A673 (cell line): ENCODE measurements at regions of chr5 and their contacts with region 1.

Region 1: DNA sequence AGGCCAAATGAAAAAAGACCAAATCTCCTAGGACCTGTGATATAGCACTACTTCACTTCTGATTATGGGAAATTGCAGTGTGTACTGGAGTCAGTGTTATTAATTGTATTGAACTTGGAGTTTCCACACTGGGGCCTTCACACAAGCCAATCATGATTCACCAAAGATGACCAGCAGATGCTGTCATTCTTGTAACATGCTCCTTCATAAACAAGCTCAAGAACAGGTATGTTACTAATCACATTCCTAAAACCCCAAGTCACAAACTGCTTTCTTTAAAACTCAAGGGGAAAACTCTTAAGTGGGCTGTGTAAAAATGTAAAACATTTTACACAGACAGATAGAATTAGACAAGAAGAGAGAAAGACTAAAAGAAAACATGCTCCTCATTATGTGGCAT is 5.6 kb downstream of the KLHL3 start:
- DNase-seq: no peak
- H3K4me3 ChIP-seq: no peak overlapping the region
- H3K27ac ChIP-seq: no peak overlapping the region
- H3K4me1 ChIP-seq: no peaks in the 10 kb centered on the region
- H3K27me3 ChIP-seq: peaks cover 3% of the 10 kb centered on the region
- CTCF ChIP-seq: no peak

Region 2: DNA sequence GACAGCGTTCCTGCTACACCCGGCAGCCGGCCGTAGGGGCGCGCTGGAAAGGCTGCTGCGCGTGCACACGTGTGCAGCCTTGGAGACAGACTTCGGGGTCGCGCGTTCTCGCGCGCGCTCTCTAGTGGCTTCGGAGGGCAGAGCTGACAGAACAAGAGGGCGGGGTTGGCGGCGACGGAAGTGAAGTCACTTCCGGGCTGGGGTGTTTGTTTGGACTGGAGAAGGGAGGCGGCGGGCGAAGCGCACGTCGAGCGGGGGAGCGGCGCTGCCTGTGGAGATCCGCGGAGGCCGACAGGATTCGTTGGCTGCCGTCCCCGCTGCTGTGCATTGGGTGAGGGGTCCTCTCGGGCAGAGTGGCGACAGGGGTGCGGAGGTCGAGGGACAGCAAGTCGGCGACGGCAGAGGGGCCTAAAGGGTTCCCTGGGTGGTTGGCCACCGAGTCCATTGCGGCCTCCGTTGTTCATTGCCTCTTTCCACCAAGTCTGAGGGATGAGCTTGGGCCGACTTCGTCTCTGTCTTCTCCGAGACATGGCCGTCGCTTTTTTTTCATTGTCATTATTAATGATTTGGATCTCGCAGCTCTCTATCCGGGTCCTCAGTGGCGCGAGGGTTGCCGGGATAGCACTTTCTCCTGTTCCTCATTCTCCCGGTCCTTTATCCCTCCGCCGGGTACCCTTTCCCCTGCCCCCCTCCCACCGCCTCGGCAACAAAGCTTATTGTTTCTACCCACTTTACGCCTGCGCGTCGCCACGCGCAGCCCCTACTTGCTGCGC is 1611.5 kb after region 1 on chr5 and contains the start of gene PAIP2:
- CTCF ChIA-PET with region 1: no interaction called
- POLR2A ChIA-PET with region 1: interaction called, 22 read pairs
- intact Hi-C with region 1: no loop called
- DNase-seq: peak; percentile 99
- H3K4me3 ChIP-seq: peak within 1 kb of the TSS; percentile 74
- H3K27ac ChIP-seq: peak within 1 kb of the TSS; percentile 99
- H3K4me1 ChIP-seq: peaks cover 12% of the 10 kb centered on the region
- H3K27me3 ChIP-seq: no peaks in the 10 kb centered on the region
- CTCF ChIP-seq: peak; percentile 87
- total RNA-seq, gene PAIP2: 95.0 and 108 TPM in 2 replicates